ENCODE measurements at regions of chr22 and their contacts with region 1.

Region 1: DNA sequence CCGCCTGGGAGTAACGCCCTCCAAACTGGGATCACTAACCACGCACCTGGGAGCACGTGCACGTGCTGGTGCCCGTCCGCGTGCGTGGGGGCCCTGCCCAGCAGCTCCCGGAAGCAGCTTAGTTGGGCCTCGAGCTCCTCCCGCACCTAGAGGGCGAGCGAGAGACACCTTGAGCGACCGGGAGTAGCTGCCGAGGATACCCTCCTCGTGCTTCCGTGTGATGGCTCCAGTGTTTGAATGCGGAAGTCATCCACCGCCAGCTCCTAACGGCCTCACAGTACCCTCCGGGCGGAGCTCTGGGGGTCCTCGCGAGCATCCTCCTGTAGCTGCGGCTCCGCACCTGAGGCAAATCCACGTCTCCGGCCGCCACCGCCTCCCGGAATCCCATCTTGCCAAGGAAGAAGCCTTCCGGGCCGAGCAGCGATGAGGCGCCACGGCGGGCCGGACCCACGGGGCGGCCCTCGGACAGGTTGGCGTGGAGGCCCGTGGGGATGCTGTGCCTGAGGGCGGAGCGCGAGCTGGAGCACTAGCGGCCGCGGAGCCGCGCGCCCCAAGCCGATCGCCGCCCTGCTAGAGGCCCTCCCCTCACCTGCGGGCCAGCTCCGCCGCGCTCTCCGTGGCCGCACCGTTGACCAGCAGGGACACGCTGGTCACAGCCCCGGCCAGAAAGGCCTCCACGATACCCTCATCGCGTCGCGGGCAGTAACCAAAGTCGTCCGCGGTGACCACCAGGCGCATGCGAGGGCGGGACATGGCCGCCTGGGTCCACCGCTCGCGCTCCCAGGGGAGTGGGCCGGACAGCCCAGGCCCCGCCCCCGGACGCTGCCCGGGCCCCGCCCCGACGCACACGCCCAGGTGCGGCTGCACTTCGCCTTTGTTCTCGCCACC is at the start of gene YDJC:
- DNase-seq: peak; percentile 88 to 97 (median 94)
- ATAC-seq: peak; percentile 85 to 86
- H3K4me3 Mint-ChIP-seq: peak within 1 kb of the TSS; percentile 87 to 97 (median 90)
- H3K27ac Mint-ChIP-seq: peak within 1 kb of the TSS; percentile 78 to 97 (median 94)
- H3K4me1 Mint-ChIP-seq: peaks cover 12 to 43% (median 41%) of the 10 kb centered on the region in 4 donors
- H3K27me3 Mint-ChIP-seq: no peaks in the 10 kb centered on the region
- polyA plus RNA-seq, gene YDJC: 38.0 to 68.9 (median 53.6) TPM

Region 2: DNA sequence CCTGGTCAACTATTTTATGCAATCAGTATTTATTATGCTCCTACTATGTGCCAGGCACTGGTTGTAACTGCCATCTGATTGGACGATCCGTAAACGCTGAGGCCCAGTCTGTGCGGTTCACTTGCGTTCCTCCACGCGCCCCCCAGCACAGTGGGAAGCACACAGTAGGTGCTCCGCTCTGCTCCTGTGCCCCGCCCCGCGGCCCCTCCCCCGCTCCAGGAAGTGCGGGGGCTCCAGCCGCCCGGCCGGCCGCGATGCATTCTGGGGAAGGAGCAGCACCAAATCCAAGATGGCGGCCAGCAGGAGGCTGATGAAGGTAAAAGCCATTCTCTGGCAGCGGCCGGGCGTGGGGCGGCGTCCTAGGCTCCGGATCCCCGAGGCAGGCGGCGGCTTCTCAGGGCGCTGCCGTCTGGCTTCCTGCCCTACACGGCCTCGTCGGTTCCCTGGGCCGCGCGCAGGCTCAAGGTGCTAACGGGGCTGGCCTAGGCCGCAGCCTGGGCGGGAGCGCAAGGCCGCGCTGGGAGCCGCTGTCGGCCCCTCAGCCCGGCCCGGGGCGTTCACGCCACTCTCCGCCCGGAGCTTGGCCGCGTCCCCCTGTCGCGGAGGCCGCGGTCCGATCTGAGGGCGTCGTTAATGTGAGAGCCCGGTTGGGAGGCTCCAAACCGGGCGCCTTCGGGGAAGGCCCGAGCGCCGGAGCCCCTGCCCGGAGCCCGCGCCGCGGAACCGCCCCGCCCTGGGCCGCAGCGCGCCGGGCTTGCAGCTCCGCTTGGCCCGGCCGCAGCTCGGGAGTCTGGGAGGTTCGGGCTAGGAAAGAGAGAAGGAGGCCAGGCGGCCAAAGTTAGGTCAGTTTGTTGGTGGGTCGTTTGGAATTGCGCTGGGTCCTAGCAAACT is 61.8 kb before region 1 on chr22 and contains the start of gene UBE2L3:
- POLR2A ChIA-PET with region 1: interaction called, 11 read pairs
- DNase-seq: peak; percentile 74 to 90 (median 82)
- ATAC-seq: peak; percentile 89
- H3K4me3 Mint-ChIP-seq: peak within 1 kb of the TSS; percentile 84 to 95 (median 90)
- H3K27ac Mint-ChIP-seq: peak within 1 kb of the TSS; percentile 82 to 95 (median 93)
- H3K4me1 Mint-ChIP-seq: peaks cover 23 to 44% (median 40%) of the 10 kb centered on the region in 4 donors
- H3K27me3 Mint-ChIP-seq: no peaks in the 10 kb centered on the region
- polyA plus RNA-seq, gene UBE2L3: 88.4 to 97.6 (median 96.8) TPM

Region 3: GRCh38 chr22:21593406-21594232 is 35.9 kb before region 1 on chr22:
- POLR2A ChIA-PET with region 1: no interaction called
- DNase-seq: no peak
- ATAC-seq: no peak
- H3K4me3 Mint-ChIP-seq: no peak overlapping the region
- H3K27ac Mint-ChIP-seq: peak overlapping the region; percentile 7 to 89 (median 59)
- H3K4me1 Mint-ChIP-seq: peaks cover 38 to 74% (median 67%) of the 10 kb centered on the region in 4 donors
- H3K27me3 Mint-ChIP-seq: no peaks in the 10 kb centered on the region

Region 4: GRCh38 chr22:21641789-21642583 is 12.5 kb after region 1 on chr22 and contains the start of gene SDF2L1:
- POLR2A ChIA-PET with region 1: interaction called, 82 read pairs
- DNase-seq: peak; percentile 94 to 99 (median 98)
- ATAC-seq: peak; percentile 96 to 97
- H3K4me3 Mint-ChIP-seq: peak within 1 kb of the TSS; percentile 76 to 90 (median 84)
- H3K27ac Mint-ChIP-seq: peak within 1 kb of the TSS; percentile 61 to 95 (median 83)
- H3K4me1 Mint-ChIP-seq: peaks cover 19 to 37% (median 29%) of the 10 kb centered on the region in 4 donors
- H3K27me3 Mint-ChIP-seq: peaks cover 0 to 3% (median 0%) of the 10 kb centered on the region in 5 donors
- polyA plus RNA-seq, gene SDF2L1: 63.1 to 68.9 (median 63.4) TPM

Region 5: DNA sequence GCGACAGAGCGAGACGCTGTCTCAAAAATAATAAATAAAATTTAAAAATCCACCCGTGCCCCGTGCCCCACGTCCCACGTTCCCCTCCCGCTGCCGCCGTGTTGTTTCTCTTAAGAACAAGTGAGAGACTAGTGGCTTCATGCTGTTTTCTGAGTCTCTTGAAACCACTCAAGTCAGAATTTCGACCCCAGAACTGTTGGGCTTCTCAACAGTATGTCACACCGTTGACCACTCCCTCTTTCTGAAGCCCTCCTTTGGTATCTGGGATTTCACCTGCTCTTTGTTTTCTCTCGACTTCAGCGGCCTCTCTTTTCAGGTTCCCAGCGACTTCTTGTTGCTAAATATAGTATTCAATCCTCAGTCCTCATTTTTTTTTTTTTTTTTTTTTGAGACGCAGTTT is 37.3 kb after region 1 on chr22:
- POLR2A ChIA-PET with region 1: interaction called, 19 read pairs
- DNase-seq: peak in 1 of 10 donors; percentile 30
- ATAC-seq: no peak
- H3K4me3 Mint-ChIP-seq: peak overlapping the region; percentile 95 to 100 (median 99)
- H3K27ac Mint-ChIP-seq: peak overlapping the region; percentile 43 to 98 (median 96)
- H3K4me1 Mint-ChIP-seq: peaks cover 18 to 44% (median 35%) of the 10 kb centered on the region in 4 donors
- H3K27me3 Mint-ChIP-seq: no peaks in the 10 kb centered on the region

Measured in naive thymus-derived CD8-positive, alpha-beta T cell (primary cell).